IMR-90 (cell line): ENCODE measurements at regions of chr3 and their contacts with region 1.

Region 1: GRCh38 chr3:5217824-5218595 is 30.5 kb downstream of the EDEM1 start:
- DNase-seq: peak; percentile 51
- ATAC-seq: peak; percentile 50
- H3K4me3 ChIP-seq: no peak overlapping the region
- H3K27ac ChIP-seq: peak overlapping the region; percentile 54; the same call in 1 of the 2 replicates
- H3K4me1 ChIP-seq: peaks cover 3% of the 10 kb centered on the region; the same call in 1 of the 2 replicates
- H3K27me3 ChIP-seq: no peaks in the 10 kb centered on the region
- CTCF ChIP-seq: no peak
- POLR2A ChIP-seq: no peak
- RAD21 ChIP-seq: no peak

Region 2: DNA sequence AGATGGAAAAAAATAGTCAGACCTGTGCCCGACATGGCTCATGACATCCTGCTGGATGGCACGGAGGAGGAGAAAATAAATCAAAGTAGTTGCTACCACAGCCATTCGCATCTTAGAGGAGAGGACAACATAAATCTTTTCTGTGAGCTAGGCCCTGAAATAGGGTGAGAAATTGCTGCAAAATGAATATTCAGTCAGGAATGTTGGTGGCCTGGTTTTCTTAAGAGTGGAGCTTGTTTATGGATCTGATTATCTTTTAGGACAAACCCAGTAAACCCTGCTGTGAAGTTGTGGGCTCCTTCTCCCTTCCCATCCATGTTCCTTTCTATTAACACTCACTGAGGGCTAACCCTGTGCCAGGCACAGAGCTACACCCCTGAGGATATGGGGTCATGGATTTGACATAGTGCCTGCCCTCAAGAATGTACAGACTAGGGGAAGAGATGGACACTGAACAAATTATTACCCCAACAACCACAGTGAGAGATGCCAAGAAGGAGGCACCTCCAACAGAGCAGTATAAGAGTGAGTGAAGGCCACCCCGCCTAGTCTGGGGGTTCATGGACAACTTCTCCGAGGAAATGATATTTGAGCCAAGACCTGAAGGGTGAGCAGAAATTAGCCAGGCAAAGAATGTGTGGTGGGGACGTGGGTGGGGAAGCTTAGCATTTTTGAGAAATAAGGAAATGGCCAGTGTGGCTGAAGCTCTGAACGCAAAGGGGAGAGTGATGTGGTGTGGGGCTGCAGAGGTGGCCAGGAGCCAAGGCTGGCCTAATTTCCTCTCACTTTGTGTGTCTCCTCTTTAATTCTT is 164.8 kb before region 1 on chr3:
- CTCF ChIA-PET with region 1: no interaction called
- POLR2A ChIA-PET with region 1: no interaction called
- dilution Hi-C with region 1: no loop called
- in situ Hi-C with region 1: no loop called
- intact Hi-C with region 1: no loop called
- DNase-seq: peak; percentile 49
- ATAC-seq: peak; percentile 50
- H3K4me3 ChIP-seq: no peak overlapping the region
- H3K27ac ChIP-seq: no peak overlapping the region
- H3K4me1 ChIP-seq: peaks cover 8% of the 10 kb centered on the region
- H3K27me3 ChIP-seq: no peaks in the 10 kb centered on the region
- CTCF ChIP-seq: no peak
- POLR2A ChIP-seq: no peak
- RAD21 ChIP-seq: no peak

Region 3: GRCh38 chr3:5194341-5195159 is 23.5 kb before region 1 on chr3:
- CTCF ChIA-PET with region 1: no interaction called
- POLR2A ChIA-PET with region 1: interaction called, 10 read pairs
- dilution Hi-C with region 1: no loop called
- in situ Hi-C with region 1: no loop called
- intact Hi-C with region 1: no loop called
- DNase-seq: peak; percentile 91
- ATAC-seq: peak; percentile 63
- H3K4me3 ChIP-seq: no peak overlapping the region
- H3K27ac ChIP-seq: no peak overlapping the region; the same call in 1 of the 2 replicates
- H3K4me1 ChIP-seq: peaks cover 26% of the 10 kb centered on the region
- H3K27me3 ChIP-seq: no peaks in the 10 kb centered on the region
- CTCF ChIP-seq: no peak
- POLR2A ChIP-seq: no peak
- RAD21 ChIP-seq: no peak